K562 (cell line): ENCODE measurements at regions of chr2 and their contacts with region 1.

Region 1: GRCh38 chr2:131105156-131105949 is at the start of gene PLEKHB2:
- DNase-seq: peak; percentile 95 to 96 (median 96)
- ATAC-seq: peak; percentile 86
- H3K4me3 ChIP-seq: peak within 1 kb of the TSS; percentile 69
- H3K27ac ChIP-seq: peak within 1 kb of the TSS; percentile 90
- H3K4me1 ChIP-seq: peaks cover 10 to 26% of the 10 kb centered on the region in 2 experiments; a peak in 4 of 5 replicates
- H3K27me3 ChIP-seq: no peaks in the 10 kb centered on the region
- CTCF ChIP-seq: peak in 2 of 3 experiments; percentile 25 to 33; a peak in 1 of 6 replicates
- EP300 ChIP-seq: no peak
- POLR2A ChIP-seq: peak; percentile 91
- RAD21 ChIP-seq: no peak
- polyA plus RNA-seq, gene PLEKHB2: 41.3 to 42.6 TPM

Region 2: DNA sequence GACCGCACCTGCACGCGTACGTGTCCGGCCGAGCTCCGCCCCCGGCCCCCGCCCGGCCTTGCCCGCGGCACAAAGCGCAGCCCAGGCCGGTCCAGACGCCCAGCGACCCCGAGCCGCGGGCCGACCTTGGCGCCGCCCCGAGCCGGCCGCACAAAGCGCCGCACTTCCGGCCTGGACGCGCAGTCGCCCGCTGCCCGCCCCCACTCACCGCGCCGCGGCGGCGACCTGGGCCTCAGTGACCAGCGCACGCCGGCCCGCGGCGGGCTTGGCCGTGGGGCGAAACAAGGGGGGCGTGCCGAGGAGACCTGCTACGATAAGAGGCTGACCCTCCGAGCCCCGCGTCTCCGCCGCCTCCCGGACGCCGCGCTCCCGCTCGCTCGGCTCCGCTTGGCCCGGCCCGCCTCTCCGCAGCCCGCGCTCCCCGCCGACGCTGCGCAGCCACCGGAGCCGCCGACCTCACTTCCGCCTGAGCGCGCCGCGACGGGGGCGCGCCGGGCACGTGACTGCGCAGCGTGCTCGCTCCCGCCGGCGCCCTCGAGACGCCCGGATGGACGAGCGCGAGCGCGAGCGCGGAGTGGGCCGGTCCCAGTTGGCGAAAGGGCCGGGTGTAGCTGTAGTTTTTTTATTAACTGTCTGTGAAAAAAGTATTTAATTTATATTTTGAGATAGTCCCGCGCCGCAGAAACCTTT is 12.2 kb before region 1 on chr2 and contains the start of gene FAM168B:
- CTCF ChIA-PET with region 1: interaction called, 5 read pairs
- POLR2A ChIA-PET with region 1: interaction called, 35 read pairs
- in situ Hi-C with region 1: no loop called
- intact Hi-C with region 1: no loop called
- DNase-seq: peak; percentile 88 to 94 (median 90)
- ATAC-seq: peak; percentile 95
- H3K4me3 ChIP-seq: peak within 1 kb of the TSS; percentile 94
- H3K27ac ChIP-seq: peak within 1 kb of the TSS; percentile 99
- H3K4me1 ChIP-seq: peaks cover 6 to 10% of the 10 kb centered on the region in 2 experiments; a peak in 3 of 5 replicates
- H3K27me3 ChIP-seq: no peaks in the 10 kb centered on the region
- CTCF ChIP-seq: 0 out of 6 replicates have a peak, but pooled peaks of 1 of the 3 experiments have one; percentile 13
- EP300 ChIP-seq: no peak
- POLR2A ChIP-seq: peak; percentile 85
- RAD21 ChIP-seq: no peak
- polyA plus RNA-seq, gene FAM168B: 3.3 to 5.4 TPM

Region 3: GRCh38 chr2:131154071-131154531 is 48.7 kb after region 1 on chr2:
- CTCF ChIA-PET with region 1: no interaction called
- POLR2A ChIA-PET with region 1: no interaction called
- in situ Hi-C with region 1: no loop called
- intact Hi-C with region 1: no loop called
- DNase-seq: peak; percentile 78 to 84 (median 81)
- ATAC-seq: peak; percentile 92
- H3K4me3 ChIP-seq: no peak overlapping the region
- H3K27ac ChIP-seq: no peak overlapping the region
- H3K4me1 ChIP-seq: peaks cover 0 to 31% of the 10 kb centered on the region in 2 experiments; a peak in 3 of 5 replicates
- H3K27me3 ChIP-seq: peaks cover 0 to 14% of the 10 kb centered on the region in 2 experiments; a peak in 2 of 5 replicates
- CTCF ChIP-seq: peak; percentile 87 to 92 (median 92)
- EP300 ChIP-seq: no peak
- POLR2A ChIP-seq: no peak
- RAD21 ChIP-seq: peak; percentile 92 to 96